A673 (cell line): ENCODE measurements at regions of chr7 and their contacts with region 1.

Region 1: DNA sequence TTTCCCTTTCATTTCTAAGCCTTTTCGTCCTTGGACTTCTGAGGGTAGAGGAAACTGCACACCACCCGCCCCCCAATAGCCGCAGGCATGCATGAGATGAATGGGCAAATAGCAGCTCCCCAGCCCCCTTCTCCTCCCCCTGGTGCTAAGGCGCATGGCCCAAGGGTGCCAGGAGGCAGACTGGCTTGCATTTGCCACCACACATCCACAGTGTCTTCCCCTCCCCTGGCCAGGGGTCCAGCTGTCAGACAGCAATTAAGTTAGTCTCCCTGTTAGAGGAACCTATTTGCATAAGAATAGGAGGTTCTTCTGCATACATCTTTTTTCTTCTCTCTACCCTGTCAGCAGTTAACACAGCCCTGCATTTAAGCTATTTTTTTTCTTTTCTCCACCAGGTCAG is 20.2 kb downstream of the TOMM7 start:
- DNase-seq: peak; percentile 71
- H3K4me3 ChIP-seq: no peak overlapping the region
- H3K27ac ChIP-seq: no peak overlapping the region
- H3K4me1 ChIP-seq: peaks cover 17% of the 10 kb centered on the region
- H3K27me3 ChIP-seq: no peaks in the 10 kb centered on the region
- CTCF ChIP-seq: no peak

Region 2: DNA sequence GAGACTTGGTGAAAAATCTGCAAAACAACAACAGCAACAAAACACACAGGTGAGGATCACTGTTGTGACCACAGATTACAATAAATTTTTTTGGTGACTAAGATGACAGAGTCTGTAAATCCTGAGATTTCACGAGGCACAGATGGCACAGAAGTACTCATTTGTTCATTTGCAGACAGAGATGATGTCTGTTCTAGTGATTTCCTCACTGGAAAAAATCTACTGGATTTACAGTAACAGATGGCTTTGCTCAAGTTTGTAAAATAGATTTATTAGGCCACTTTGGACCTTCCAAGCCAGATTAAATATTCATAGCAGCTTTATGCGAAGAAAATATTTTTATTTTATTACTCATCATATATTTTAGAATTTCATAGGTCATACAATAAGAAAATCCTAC is 188.9 kb before region 1 on chr7:
- CTCF ChIA-PET with region 1: no interaction called
- POLR2A ChIA-PET with region 1: interaction called, 15 read pairs
- intact Hi-C with region 1: no loop called
- DNase-seq: no peak
- H3K4me3 ChIP-seq: no peak overlapping the region
- H3K27ac ChIP-seq: no peak overlapping the region
- H3K4me1 ChIP-seq: no peaks in the 10 kb centered on the region
- H3K27me3 ChIP-seq: no peaks in the 10 kb centered on the region
- CTCF ChIP-seq: no peak

Region 3: DNA sequence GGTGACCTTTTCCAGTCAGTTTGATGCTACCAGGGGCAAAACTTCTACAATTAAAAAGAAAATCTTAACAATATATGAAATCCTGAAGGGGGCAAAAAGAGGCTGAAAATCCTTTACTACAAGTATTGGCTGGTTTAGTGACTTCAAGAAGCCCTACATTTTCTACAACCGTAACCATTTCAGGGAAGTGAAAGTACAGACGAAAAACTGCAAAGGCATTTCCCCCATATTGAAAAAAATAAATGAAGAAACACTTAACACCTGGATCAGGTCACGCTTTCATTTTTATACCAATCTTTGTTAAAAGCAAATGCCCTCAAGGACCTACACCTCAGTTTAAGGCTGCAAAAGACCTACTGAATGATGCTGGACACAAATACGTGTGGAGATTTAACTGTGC is 36.8 kb before region 1 on chr7:
- CTCF ChIA-PET with region 1: no interaction called
- POLR2A ChIA-PET with region 1: no interaction called
- intact Hi-C with region 1: no loop called
- DNase-seq: no peak
- H3K4me3 ChIP-seq: no peak overlapping the region
- H3K27ac ChIP-seq: no peak overlapping the region
- H3K4me1 ChIP-seq: no peaks in the 10 kb centered on the region
- H3K27me3 ChIP-seq: peaks cover 12% of the 10 kb centered on the region
- CTCF ChIP-seq: no peak